ENCODE measurements at regions of chr3 and their contacts with region 1.

Region 1: DNA sequence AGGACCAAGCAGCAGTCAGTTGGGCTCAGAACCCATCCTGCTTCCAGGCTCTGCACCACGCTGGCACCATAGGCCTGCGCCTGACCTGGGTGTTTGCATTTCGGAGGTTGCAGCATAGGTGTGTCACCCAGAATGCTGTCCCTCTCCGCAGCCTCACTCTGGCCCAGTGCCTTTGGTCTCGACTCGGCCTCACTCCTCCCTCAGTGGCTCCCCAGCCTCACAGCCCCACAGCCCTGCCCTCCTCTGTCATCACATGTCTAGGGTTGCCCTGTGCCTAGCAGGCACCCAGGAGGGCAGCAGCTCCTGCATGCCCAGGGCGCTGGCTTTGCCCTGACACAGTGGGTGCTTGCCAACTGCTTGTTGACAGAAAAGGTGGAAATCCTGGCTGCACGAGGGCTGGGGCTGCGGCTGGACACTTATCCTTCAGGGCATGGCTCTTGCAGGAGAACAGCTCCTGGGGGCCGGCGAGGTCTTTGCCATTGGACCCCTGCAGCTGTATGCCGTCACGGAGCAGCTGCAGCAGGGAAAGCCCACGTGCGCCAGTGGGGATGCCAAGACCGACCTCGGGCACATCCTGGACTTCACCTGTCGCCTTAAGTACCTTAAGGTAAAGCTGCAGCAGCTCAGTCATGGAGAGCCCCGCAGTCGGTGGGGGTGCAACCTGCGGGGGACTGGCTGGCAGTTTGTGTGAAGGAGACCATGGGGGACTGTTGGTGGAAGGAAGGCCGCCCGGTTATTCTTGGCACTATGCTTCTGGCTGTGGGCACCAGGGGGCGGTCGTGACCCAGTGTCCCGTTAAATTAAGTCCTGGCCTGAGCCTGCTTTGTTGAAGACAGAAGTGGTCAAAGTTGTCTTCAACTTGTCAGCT is 16.2 kb downstream of the NISCH start:
- DNase-seq: peak; percentile 62 to 91
- ATAC-seq: peak; percentile 49 to 78
- H3K4me3 ChIP-seq: no peak overlapping the region
- H3K27ac ChIP-seq: peak overlapping the region; percentile 69 to 85 (median 78)
- H3K4me1 ChIP-seq: peaks cover 33 to 52% of the 10 kb centered on the region in 2 donors
- H3K27me3 ChIP-seq: no peaks in the 10 kb centered on the region
- CTCF ChIP-seq: peak; percentile 77 to 88 (median 83)
- POLR2A ChIP-seq: peak in 1 of 2 donors; percentile 26

Region 2: GRCh38 chr3:52128118-52128683 is 343.4 kb before region 1 on chr3:
- in situ Hi-C with region 1: no loop called
- intact Hi-C with region 1: no loop called
- DNase-seq: no peak
- ATAC-seq: no peak
- H3K4me3 ChIP-seq: no peak overlapping the region
- H3K27ac ChIP-seq: no peak overlapping the region
- H3K4me1 ChIP-seq: no peaks in the 10 kb centered on the region
- H3K27me3 ChIP-seq: no peaks in the 10 kb centered on the region
- CTCF ChIP-seq: no peak
- POLR2A ChIP-seq: no peak

Region 3: GRCh38 chr3:52238761-52239701 is 232.6 kb before region 1 on chr3 and contains the start of gene TWF2:
- in situ Hi-C with region 1: no loop called
- intact Hi-C with region 1: no loop called
- DNase-seq: peak; percentile 45 to 59
- ATAC-seq: peak; percentile 20 to 28
- H3K4me3 ChIP-seq: peak within 1 kb of the TSS; percentile 72 to 95 (median 90)
- H3K27ac ChIP-seq: peak within 1 kb of the TSS; percentile 99 to 100 (median 100)
- H3K4me1 ChIP-seq: peaks cover 50 to 54% of the 10 kb centered on the region in 2 donors
- H3K27me3 ChIP-seq: no peaks in the 10 kb centered on the region
- CTCF ChIP-seq: peak in 4 of 5 experiments; percentile 31 to 60 (median 36)
- POLR2A ChIP-seq: peak; percentile 76 to 81
- total RNA-seq, gene TWF2: 99.2 to 222 (median 168) TPM

Region 4: GRCh38 chr3:52483577-52484381 is 12.2 kb after region 1 on chr3:
- in situ Hi-C with region 1: no loop called
- intact Hi-C with region 1: loop called (anchors 2 kb)
- DNase-seq: peak in 1 of 2 donors; percentile 70
- ATAC-seq: peak; percentile 78 to 79
- H3K4me3 ChIP-seq: no peak overlapping the region
- H3K27ac ChIP-seq: peak overlapping the region; percentile 77 to 86 (median 83)
- H3K4me1 ChIP-seq: peaks cover 21 to 22% of the 10 kb centered on the region in 2 donors
- H3K27me3 ChIP-seq: no peaks in the 10 kb centered on the region
- CTCF ChIP-seq: no peak
- POLR2A ChIP-seq: no peak

Region 5: GRCh38 chr3:52544937-52545336 is 73.3 kb after region 1 on chr3:
- in situ Hi-C with region 1: loop called in 1 of 4 experiments (anchors 10 kb)
- intact Hi-C with region 1: no loop called
- DNase-seq: no peak
- ATAC-seq: no peak
- H3K4me3 ChIP-seq: no peak overlapping the region
- H3K27ac ChIP-seq: peak overlapping the region in 3 of 4 donors; percentile 18 to 53 (median 20)
- H3K4me1 ChIP-seq: peaks cover 8 to 30% of the 10 kb centered on the region in 2 donors
- H3K27me3 ChIP-seq: no peaks in the 10 kb centered on the region
- CTCF ChIP-seq: no peak
- POLR2A ChIP-seq: no peak

Region 6: GRCh38 chr3:52606373-52607085 is 134.9 kb after region 1 on chr3:
- in situ Hi-C with region 1: no loop called
- intact Hi-C with region 1: loop called (anchors 5 kb)
- DNase-seq: peak; percentile 58 to 79
- ATAC-seq: peak; percentile 95 to 98
- H3K4me3 ChIP-seq: no peak overlapping the region
- H3K27ac ChIP-seq: peak overlapping the region; percentile 53 to 76 (median 62)
- H3K4me1 ChIP-seq: peaks cover 12 to 32% of the 10 kb centered on the region in 2 donors
- H3K27me3 ChIP-seq: no peaks in the 10 kb centered on the region
- CTCF ChIP-seq: no peak
- POLR2A ChIP-seq: no peak